Right cardiac atrium (tissue), 5 donors: ENCODE measurements at regions of chr7 and their contacts with region 1.

Region 1: DNA sequence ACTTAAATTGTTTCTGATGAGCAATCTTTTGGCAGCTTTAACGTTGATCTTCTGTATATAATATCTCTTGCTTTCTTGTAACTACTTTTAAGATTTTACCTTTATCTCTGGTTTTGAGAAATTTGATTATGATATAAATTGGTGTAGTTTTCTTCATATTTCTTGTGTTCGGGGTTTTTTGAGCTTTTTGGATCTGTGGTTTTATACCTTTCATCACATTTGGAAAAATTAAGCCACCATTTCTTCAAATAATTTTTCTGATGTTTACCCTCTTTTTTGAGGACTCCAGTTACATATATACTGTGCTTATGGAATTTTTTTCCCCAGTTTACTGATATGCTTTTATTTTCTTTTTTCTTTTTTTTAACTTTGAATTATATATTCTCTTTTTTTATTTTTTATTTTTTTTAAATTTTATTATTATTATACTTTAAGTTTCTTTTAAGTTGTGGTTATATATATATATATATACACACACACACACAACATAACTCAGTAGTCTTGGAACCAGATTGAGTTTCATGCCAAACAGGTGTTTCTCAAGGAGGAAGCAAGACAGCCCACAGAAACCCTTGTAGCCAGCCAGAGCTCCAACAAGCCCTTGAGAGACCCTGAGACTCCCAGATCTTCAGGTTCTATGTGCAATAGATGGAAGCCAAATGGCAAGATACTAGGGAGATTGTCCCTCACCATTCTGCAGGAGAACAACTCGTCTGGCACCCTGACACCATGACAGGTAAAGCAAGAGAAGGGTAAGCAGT is 27.5 kb upstream of the NME8 start:
- DNase-seq: no peak
- ATAC-seq: no peak
- H3K4me3 ChIP-seq: no peak overlapping the region
- H3K27ac ChIP-seq: no peak overlapping the region
- H3K4me1 ChIP-seq: no peaks in the 10 kb centered on the region
- H3K27me3 ChIP-seq: no peaks in the 10 kb centered on the region

Region 2: DNA sequence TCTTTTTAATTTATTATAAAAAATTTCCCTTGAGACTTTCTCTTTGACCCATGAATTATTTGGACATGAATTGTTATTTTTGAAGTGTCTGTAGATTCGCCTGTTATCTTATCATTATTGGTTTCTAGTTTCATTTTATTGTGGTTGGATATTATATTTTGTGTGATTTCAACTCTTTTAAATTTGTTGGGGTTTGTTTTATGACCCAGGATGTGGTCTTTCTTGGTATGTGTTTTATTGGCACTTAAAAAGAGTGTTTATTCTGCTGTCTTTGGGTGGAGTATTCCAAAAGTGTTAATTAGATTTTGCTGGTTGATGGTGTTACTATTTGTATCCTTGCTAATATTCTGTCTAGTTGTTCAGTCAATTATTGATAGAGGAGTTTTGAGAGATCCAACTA is 187.8 kb before region 1 on chr7:
- intact Hi-C with region 1: loop called in 1 of 4 experiments (anchors 10 kb)
- DNase-seq: no peak
- ATAC-seq: no peak
- H3K4me3 ChIP-seq: no peak overlapping the region
- H3K27ac ChIP-seq: no peak overlapping the region
- H3K4me1 ChIP-seq: no peaks in the 10 kb centered on the region
- H3K27me3 ChIP-seq: no peaks in the 10 kb centered on the region

Region 3: DNA sequence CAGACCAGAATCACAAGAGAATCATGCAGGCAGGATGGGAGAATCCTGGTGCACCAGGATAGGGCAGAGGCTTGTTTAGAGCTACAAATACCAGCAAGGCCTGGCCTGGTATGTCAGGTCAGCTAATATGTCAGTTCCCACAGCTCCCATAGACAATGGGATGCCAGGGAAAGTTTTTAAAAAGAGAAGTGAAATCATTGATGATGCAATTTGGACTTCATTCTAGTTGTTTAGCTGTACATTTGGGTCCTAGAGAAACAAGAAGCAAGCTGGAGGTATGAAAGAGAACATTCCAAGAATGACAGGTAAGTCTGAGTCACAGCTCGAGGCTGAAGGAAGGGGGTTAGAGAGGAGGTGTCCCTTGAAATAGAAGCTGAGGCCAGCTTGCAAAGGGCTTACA is 92.1 kb before region 1 on chr7:
- intact Hi-C with region 1: loop called in 1 of 4 experiments (anchors 10 kb)
- DNase-seq: no peak
- ATAC-seq: peak in 1 of 2 donors; percentile 26
- H3K4me3 ChIP-seq: no peak overlapping the region
- H3K27ac ChIP-seq: no peak overlapping the region
- H3K4me1 ChIP-seq: peaks cover 2% of the 10 kb centered on the region
- H3K27me3 ChIP-seq: no peaks in the 10 kb centered on the region

Region 4: GRCh38 chr7:37930226-37930948 is 109.5 kb after region 1 on chr7:
- intact Hi-C with region 1: no loop called
- DNase-seq: no peak
- ATAC-seq: no peak
- H3K4me3 ChIP-seq: no peak overlapping the region
- H3K27ac ChIP-seq: no peak overlapping the region
- H3K4me1 ChIP-seq: no peaks in the 10 kb centered on the region
- H3K27me3 ChIP-seq: no peaks in the 10 kb centered on the region